CD4-positive, alpha-beta T cell (primary cell): ENCODE measurements at regions of chr4 and their contacts with region 1.

Region 1: DNA sequence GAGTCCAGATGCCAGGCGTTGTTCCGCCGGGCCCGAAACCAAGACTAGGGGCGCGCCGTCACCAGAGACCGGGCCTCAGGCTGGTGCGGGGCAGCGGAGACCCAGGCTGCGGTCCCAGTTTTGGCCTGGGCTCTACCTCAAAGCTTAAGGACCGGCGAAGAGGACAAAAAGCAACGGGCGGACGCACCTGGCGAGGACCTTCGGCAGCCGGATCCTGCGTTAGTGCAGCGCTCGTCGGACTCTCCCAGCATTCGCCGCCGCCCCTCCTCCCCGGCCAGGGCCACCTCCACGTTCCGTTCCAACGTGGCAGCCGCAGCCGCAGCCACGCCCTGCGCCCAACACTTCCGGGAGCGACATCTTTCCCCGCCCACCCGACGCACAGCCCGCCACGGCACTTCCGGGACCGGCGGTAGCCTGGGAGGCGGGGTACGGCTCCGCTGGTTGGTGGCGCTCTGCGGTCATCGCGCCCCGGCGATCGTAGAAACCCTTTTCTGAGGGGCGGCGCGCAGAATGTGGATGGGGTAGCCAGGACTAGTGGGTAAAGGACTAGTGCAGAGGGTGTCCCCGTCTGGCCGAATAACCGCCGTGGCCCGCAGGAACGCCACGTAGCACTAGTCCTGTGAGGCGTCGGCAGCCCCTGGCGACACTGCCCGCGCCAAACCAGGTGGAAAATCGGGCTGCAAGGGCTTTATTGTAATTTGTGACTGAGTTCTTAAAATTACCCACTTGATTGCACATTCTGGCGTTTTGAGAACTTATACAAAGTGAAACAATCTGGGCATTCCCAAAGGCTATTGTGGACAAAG is at the start of gene SEC31A:
- DNase-seq: peak; percentile 93 to 99 (median 96)
- ATAC-seq: peak; percentile 91
- H3K4me3 ChIP-seq: peak within 1 kb of the TSS; percentile 93
- H3K4me3 Mint-ChIP-seq: peak within 1 kb of the TSS; percentile 91
- H3K27ac ChIP-seq: peak within 1 kb of the TSS; percentile 87 to 95
- H3K27ac Mint-ChIP-seq: peak within 1 kb of the TSS; percentile 99
- H3K4me1 ChIP-seq: peaks cover 11% of the 10 kb centered on the region
- H3K4me1 Mint-ChIP-seq: peaks cover 49% of the 10 kb centered on the region
- H3K27me3 ChIP-seq: no peaks in the 10 kb centered on the region
- H3K27me3 Mint-ChIP-seq: no peaks in the 10 kb centered on the region
- CTCF ChIP-seq: no peak
- total RNA-seq, gene SEC31A: 130 to 131 TPM

Region 2: DNA sequence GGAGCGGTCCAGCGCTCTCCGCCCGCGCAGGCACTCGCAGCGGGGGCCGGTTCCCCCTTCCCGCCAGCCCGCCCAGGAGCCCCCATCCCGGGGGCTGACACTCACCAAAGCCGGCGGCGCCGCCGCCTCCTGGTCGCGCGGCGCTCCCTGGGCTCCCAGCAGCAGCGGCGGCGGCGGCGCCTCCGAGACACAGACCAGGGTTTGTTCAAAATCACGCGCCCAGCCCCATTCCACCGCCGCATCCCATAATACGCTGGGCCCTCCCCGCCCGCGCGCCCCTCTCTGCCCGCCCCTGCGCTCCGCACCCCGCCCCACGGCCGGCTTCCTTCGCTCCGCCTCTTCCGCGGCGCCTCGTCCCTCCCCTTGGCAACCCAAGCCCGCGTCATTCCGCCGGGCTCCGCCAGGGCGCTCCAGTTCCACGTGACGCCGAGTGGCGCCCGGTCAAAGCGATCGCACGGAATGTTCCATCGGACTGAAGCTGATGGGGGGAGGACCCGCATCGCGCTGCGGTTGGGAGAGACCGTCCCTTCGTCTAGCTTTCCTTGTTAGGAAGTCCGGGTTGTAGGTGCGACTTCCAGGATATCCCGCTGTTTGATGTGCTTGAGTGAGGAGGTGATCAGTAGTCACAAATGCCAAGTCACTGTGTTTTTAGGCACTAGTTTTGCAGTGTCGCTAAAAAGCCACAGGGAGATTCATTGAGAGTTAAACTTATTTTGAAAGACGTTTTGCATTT is 121.7 kb after region 1 on chr4:
- CTCF ChIA-PET with region 1: no interaction called
- POLR2A ChIA-PET with region 1: interaction called, 5 read pairs
- intact Hi-C with region 1: loop called (anchors 2 kb)
- DNase-seq: peak; percentile 94 to 99 (median 96)
- ATAC-seq: peak; percentile 85
- H3K4me3 ChIP-seq: peak overlapping the region; percentile 71
- H3K4me3 Mint-ChIP-seq: peak overlapping the region; percentile 97
- H3K27ac ChIP-seq: peak overlapping the region; percentile 33 to 49
- H3K27ac Mint-ChIP-seq: peak overlapping the region; percentile 91
- H3K4me1 ChIP-seq: peaks cover 26% of the 10 kb centered on the region
- H3K4me1 Mint-ChIP-seq: peaks cover 58% of the 10 kb centered on the region
- H3K27me3 ChIP-seq: no peaks in the 10 kb centered on the region
- H3K27me3 Mint-ChIP-seq: no peaks in the 10 kb centered on the region
- CTCF ChIP-seq: peak; percentile 56